GM12878 (cell line): ENCODE measurements at regions of chr3 and their contacts with region 1.

Region 1: DNA sequence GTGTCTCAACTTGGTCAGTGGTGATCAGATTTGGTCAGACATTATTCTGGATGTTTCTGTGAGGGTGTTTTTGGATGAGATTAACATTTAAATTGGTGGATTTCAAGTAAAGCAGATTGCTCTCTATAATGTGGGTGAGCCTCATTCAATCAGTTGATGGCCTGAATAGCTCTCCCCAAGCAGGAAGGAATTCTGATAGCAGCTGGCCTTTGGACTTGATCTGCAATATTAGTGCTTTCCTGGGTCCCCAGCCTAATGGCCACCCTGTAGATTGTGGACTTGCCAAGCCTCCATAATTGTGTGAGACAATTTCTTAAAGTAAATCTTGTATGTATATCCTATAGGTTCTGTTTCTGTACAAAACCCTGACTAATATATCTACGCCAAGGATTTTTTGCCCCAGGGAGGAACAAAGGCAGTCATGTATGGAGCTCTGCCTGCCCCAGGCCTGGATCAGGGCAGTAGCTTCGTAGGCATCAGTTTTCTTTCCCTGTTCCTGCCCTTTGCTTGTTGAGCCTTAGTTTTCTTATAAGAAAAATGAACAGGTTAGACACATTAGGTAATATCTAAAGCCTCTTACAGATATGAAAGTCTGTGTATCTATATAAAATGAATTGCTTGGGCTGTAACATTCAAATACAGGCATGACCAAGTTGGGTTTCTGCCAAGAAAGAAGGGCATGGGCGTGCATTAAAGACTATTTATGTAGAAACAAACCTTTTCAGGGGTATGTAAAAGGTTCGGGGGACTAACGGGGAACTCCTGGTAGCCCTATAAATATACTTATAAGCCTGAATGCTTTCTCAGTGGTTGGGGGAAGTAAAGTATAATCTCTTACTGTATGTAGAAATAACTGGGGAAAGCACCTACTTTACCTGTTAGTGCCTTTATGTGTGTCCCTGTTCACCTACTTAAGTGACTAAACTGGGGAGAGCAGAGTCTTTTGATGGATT is 154.2 kb upstream of the TBL1XR1 start:
- DNase-seq: peak; percentile 87
- ATAC-seq: peak; percentile 96
- H3K4me3 ChIP-seq: no peak overlapping the region
- H3K27ac ChIP-seq: peak overlapping the region; percentile 57
- H3K4me1 ChIP-seq: peaks cover 18% of the 10 kb centered on the region
- H3K27me3 ChIP-seq: no peaks in the 10 kb centered on the region
- CTCF ChIP-seq: no peak
- EP300 ChIP-seq: peak in 1 of 2 experiments; percentile 45; a peak in 2 of 4 replicates
- POLR2A ChIP-seq: no peak
- RAD21 ChIP-seq: peak; percentile 4; the same call in 1 of the 2 replicates

Region 2: GRCh38 chr3:177133860-177134815 is 217.3 kb before region 1 on chr3:
- CTCF ChIA-PET with region 1: no interaction called
- POLR2A ChIA-PET with region 1: no interaction called
- RAD21 ChIA-PET with region 1: no interaction called
- SMC1A ChIA-PET with region 1: no interaction called
- in situ Hi-C with region 1: no loop called
- intact Hi-C with region 1: no loop called
- DNase-seq: no peak
- ATAC-seq: no peak
- H3K4me3 ChIP-seq: no peak overlapping the region
- H3K27ac ChIP-seq: no peak overlapping the region
- H3K4me1 ChIP-seq: 0 out of 2 replicates have a peak, but pooled peaks cover 3% of the 10 kb centered on the region
- H3K27me3 ChIP-seq: no peaks in the 10 kb centered on the region
- CTCF ChIP-seq: no peak
- EP300 ChIP-seq: no peak
- POLR2A ChIP-seq: no peak
- RAD21 ChIP-seq: no peak

Region 3: DNA sequence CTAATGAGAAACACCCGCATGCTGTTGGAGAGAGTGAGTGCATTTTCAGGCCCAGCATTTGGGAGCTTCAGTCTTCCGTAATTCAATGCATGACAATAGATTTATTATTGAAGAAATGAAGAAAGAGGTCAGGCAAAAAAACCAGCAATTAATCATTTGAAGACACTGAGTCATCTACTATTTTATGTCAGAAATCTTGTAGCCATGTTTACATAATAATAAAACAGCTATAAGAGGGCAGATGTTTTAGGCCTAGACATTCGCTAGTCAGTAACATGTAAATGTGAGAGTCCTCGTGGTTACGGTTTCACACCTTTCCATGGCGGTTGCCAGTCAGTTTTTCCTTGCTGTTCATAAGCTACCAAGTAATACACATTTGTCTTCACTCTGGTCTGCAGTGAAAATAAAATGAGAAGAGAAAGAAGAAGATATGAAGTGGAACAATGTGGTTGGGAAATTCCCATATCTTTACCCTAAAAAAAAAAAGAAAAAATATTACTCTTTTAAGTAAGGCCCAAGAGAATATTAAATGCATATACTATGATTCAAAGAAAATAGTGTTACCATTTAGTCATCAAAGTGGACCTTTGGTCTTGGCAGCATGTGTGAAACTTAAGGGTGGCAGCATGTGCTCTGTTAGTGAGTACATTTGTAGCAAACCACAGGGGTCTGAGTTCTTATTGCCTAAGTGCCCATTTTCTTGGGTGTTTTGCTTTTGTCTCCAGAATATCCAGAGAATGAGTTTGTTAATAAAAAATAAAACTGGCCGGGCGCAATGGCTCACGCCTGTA is 13.7 kb before region 1 on chr3:
- CTCF ChIA-PET with region 1: interaction called, 3 read pairs
- POLR2A ChIA-PET with region 1: no interaction called
- RAD21 ChIA-PET with region 1: no interaction called
- SMC1A ChIA-PET with region 1: interaction called, 10 read pairs
- in situ Hi-C with region 1: no loop called
- intact Hi-C with region 1: no loop called
- DNase-seq: peak; percentile 87
- ATAC-seq: peak; percentile 89
- H3K4me3 ChIP-seq: no peak overlapping the region
- H3K27ac ChIP-seq: peak overlapping the region; percentile 73
- H3K4me1 ChIP-seq: peaks cover 24% of the 10 kb centered on the region
- H3K27me3 ChIP-seq: no peaks in the 10 kb centered on the region
- CTCF ChIP-seq: no peak
- EP300 ChIP-seq: peak; percentile 50 to 58; a peak in 3 of 4 replicates
- POLR2A ChIP-seq: no peak
- RAD21 ChIP-seq: no peak

Region 4: DNA sequence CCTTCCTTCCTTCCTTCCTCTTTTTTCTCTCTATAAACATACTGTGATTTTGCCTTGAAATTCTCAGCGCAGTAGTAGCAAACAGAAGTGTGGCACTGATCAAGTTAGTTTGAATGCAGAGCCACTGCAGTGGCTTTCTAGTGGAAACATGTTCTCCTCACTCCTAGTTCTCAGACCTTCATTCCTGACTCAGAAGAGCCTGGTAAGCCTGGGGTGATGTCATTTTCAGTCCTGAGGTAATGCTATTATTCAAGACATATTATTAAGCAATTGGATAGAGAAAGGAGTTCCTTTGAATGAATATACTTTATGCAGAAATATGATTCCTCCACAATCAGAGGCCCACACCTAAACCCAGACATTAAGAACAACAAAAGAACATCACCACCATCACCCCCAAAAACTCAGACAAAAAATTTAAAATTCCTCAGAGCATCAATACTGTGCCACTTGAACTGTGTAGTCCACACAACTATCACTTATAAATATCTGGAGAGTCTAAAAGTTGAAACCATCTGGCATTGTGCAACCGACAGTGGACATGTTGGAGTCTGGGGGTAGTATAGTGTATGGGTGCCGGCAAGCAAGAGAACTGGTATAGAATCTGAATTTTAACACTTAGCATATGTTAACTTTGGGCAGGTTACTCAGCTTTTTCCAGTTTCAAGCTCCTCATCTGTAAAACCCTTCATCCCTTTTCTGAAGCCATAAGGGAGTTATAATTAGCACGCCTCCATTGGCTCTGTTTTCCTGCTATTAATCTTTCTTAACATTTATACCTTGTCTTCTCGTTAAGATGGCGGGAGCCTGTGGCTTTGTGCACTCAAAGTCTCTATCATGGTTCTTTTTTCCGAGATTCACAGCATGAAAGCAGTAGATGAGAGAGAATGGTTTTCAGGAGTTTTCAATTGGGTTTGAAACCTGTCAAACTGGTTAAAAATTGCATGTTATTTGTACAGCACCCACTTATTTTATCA is 101.3 kb after region 1 on chr3:
- CTCF ChIA-PET with region 1: no interaction called
- POLR2A ChIA-PET with region 1: no interaction called
- RAD21 ChIA-PET with region 1: no interaction called
- SMC1A ChIA-PET with region 1: no interaction called
- in situ Hi-C with region 1: no loop called
- intact Hi-C with region 1: no loop called
- DNase-seq: no peak
- ATAC-seq: no peak
- H3K4me3 ChIP-seq: no peak overlapping the region
- H3K27ac ChIP-seq: no peak overlapping the region
- H3K4me1 ChIP-seq: peaks cover 19% of the 10 kb centered on the region
- H3K27me3 ChIP-seq: no peaks in the 10 kb centered on the region
- CTCF ChIP-seq: no peak
- EP300 ChIP-seq: no peak
- POLR2A ChIP-seq: no peak
- RAD21 ChIP-seq: no peak